Heart right ventricle (tissue), 16 donors: ENCODE measurements at regions of chr1 and their contacts with region 1.

Region 1: DNA sequence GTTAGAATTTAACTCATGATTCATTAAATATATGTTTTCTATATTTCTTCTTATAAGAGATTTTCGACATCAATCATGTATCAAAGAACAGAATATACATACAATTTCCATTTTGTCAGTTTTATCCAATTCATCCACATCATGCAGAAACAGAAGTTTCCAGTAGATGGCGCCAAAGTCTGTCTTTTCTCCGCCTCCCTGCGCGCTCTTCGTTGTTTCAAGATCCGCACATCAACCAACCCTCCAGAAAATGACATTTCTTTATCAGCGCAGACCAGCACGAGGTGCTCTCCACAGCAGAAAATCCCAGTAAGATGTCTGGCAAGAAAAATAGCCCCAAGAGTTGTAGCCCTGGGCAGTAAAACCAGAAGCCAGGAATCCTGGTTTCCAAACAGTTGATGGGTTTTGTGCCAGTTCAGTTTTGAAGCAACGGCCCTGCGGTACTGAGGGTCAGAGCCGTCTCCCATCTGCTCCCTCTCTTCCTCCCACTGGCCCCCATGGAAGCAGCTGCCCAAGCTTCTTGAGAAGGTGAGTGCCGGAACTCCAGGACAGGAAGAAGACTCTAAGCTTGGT is 38.6 kb upstream of the GPR137B start:
- DNase-seq: peak in 1 of 2 donors; percentile 51
- ATAC-seq: peak in 6 of 8 donors; percentile 28 to 59 (median 50)
- H3K4me3 ChIP-seq: peak overlapping the region in 1 of 10 donors; percentile 17
- H3K27ac ChIP-seq: no peak overlapping the region
- H3K4me1 ChIP-seq: peaks cover 0 to 3% (median 0%) of the 10 kb centered on the region in 9 donors
- H3K27me3 ChIP-seq: no peaks in the 10 kb centered on the region
- CTCF ChIP-seq: peak; percentile 81 to 92 (median 87)

Region 2: GRCh38 chr1:236354330-236355147 is 250.8 kb after region 1 on chr1:
- intact Hi-C with region 1: loop called in 1 of 10 experiments (anchors 5 kb)
- DNase-seq: no peak
- ATAC-seq: peak in 1 of 8 donors; percentile 65
- H3K4me3 ChIP-seq: no peak overlapping the region
- H3K27ac ChIP-seq: peak overlapping the region in 2 of 10 donors; percentile 13 to 41
- H3K4me1 ChIP-seq: peaks cover 0 to 12% (median 6%) of the 10 kb centered on the region in 9 donors
- H3K27me3 ChIP-seq: no peaks in the 10 kb centered on the region
- CTCF ChIP-seq: no peak

Region 3: DNA sequence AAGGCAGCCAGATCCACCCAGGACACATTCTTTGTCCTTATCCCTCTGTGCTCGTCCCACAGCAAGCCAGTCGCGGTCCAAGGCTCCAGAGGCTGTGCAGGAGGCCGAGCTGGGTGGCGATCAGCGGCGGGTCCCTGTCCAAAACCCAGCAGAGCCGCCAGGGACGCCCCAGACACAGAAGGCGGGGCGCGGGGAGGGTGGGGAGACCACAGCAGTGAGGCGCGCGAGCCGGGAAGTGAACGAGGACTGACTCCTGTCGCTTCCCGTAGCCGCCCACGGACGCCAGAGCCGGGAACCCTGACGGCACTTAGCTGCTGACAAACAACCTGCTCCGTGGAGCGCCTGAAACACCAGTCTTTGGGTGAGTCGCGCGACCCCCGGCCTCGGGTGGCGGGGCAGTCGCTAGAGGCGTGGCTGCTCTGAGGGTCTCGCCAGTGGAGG is 420.0 kb after region 1 on chr1 and contains the start of gene LGALS8:
- intact Hi-C with region 1: loop called in 2 of 10 experiments (anchors 10 kb)
- DNase-seq: peak; percentile 92
- ATAC-seq: peak; percentile 94 to 98 (median 96)
- H3K4me3 ChIP-seq: peak within 1 kb of the TSS; percentile 54 to 100 (median 90)
- H3K27ac ChIP-seq: peak within 1 kb of the TSS; percentile 53 to 99 (median 94)
- H3K4me1 ChIP-seq: peaks cover 2 to 21% (median 17%) of the 10 kb centered on the region in 9 donors
- H3K27me3 ChIP-seq: no peaks in the 10 kb centered on the region
- CTCF ChIP-seq: peak in 1 of 9 donors; percentile 23
- total RNA-seq, gene LGALS8: 56.4 to 107 (median 90.5) TPM

Region 4: DNA sequence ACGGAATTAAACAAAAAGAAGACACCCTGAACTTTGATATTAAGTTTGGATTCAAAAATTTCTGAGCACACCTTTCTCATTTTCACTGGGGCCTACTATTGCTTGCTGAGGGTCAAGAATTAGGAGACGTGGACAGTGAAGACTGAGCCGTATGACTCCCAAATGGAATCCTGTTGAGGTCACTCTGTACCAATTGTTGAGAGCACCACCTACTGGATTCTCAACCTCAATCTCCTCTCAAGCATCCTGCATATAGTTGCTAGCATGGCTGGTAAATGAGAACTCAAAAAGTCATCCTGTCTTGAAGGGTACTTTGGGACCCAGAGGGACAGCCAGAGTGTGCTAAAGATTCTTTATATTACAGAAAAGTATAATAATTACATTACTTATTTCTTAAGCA is 671.2 kb after region 1 on chr1:
- intact Hi-C with region 1: loop called in 1 of 10 experiments (anchors 10 kb)
- DNase-seq: peak in 1 of 2 donors; percentile 16
- ATAC-seq: peak in 7 of 8 donors; percentile 41 to 74 (median 70)
- H3K4me3 ChIP-seq: no peak overlapping the region
- H3K27ac ChIP-seq: no peak overlapping the region
- H3K4me1 ChIP-seq: no peaks in the 10 kb centered on the region
- H3K27me3 ChIP-seq: peaks cover 0 to 4% (median 0%) of the 10 kb centered on the region in 7 donors
- CTCF ChIP-seq: peak in 8 of 9 donors; percentile 20 to 56 (median 38)